Activated CD4-positive, alpha-beta memory T cell treated with anti-CD3 and anti-CD28 coated beads for 36 hours (primary cell): ENCODE measurements at regions of chr10 and their contacts with region 1.

Region 1: DNA sequence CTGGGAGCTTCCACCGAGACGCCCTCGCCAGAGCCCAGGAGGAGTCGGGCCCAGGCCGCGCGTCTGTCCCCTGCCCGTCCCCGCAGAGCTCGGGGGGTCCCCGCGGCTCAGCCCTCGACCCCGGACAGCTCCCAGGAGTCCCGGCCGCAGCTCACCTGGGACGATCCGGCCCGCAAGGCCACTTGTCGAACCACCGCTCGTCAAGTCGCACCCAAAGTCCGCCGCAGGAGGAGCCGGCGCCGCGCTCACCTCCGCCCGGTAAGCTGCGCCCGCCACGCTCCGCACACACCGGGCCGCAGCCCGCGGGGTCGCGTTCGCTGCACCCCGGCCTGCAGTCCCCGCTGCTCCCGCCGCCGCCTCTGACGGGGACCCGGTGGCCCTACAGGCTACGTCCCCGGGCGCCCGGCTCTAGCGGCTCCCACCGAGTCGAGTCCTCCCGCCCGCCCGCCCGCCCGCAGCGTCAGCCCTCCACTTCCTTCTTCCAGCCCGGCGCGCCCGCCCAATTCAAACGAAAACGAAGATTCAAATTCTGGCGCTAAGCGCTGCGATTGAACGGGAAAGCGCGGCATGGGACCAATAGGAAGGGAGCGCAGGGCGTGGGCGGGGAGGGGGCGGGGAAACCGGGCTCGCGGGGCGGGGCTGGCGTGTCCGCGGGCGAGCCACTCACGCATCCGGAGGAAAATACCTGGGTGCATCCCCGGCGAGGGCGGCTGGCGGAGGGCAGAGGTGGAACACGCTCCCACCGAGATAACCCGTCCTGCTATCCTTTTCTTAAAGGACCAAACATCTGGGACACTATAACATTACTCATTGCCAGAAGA is at the start of gene MKI67:
- DNase-seq: peak; percentile 95
- H3K4me3 Mint-ChIP-seq: peak within 1 kb of the TSS; percentile 96
- H3K27ac Mint-ChIP-seq: peak within 1 kb of the TSS; percentile 90
- H3K4me1 Mint-ChIP-seq: peaks cover 24% of the 10 kb centered on the region
- H3K27me3 Mint-ChIP-seq: peaks cover 19% of the 10 kb centered on the region
- total RNA-seq, gene MKI67: 223 to 241 TPM

Region 2: DNA sequence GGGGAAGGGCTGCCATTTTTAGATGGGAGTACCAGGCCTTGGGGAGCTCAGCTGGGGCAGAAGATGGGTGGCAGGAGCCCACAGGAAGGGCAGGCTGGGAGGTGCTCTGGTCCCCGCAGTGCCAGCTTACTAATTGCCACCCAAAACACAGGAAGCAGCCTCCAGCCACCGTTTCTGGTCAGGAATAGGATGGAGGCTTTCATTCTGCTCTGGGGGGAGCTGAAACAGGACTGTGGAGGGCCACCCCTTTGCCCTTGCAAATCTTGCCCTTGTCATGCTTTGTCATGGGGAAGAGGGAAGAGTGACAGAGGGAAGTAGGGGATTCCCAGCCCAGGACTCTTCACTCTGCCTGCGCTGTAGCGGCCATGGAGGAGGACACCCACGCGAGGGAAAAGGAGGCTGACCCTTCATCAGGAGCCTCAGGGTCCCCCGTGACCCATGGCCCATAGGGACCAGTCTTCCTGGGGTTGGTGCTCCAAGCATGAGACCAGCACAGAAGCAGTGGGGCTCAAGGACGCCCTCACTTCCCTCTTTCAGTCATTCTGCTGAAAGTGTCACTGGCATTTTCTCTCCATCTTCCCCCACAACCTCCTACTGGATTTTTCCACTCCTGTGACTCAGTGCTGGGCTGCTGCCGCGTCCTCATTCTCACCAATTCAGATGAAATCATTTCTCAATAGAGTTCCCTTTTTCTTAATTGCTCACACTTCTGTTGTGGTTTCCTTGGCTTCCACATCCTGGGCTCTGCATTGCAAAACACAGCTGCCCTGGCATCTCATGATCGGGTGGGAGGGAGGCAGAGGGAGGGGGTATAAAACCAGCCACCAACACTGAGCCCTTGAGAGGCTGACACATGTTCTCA is 61.8 kb before region 1 on chr10:
- CTCF ChIA-PET with region 1: interaction called, 5 read pairs
- POLR2A ChIA-PET with region 1: interaction called, 3 read pairs
- intact Hi-C with region 1: loop called (anchors 1 kb)
- DNase-seq: peak; percentile 91
- H3K4me3 Mint-ChIP-seq: peak overlapping the region; percentile 59
- H3K27ac Mint-ChIP-seq: peak overlapping the region; percentile 96
- H3K4me1 Mint-ChIP-seq: peaks cover 58% of the 10 kb centered on the region
- H3K27me3 Mint-ChIP-seq: no peaks in the 10 kb centered on the region

Region 3: DNA sequence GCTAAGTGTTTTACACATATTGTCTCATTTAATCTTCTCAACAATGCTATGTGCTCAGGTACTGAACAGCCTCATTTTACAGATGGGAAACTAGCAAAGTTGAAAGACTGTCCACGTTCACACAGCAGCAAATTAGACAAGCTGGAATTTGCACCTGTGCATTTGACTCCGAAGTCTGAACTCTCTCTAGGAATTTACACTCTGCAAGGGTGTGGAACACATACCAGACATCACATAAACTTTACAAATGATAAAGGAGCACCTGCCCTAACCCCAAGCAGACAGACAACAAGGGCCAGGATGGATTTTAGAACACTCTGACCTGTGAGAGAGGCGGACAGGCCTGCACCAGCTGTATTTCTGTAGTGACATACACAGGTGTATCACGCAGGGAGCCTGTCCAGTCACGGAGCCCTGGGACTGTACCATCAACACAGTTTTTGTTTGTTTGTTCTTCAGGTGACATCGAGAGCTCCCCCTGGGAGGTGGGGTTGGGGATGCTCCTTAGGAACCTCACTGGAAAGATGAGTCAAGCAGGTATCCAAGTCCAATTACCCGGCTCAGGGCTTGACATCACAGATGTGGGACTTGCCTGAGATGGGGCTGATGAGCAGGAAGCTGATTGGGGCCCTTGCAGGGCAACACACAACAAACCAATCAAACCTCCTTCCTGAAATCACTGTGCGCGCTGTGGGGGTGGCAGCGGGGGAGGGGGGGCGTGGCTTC is 31.0 kb before region 1 on chr10:
- CTCF ChIA-PET with region 1: interaction called, 3 read pairs
- POLR2A ChIA-PET with region 1: interaction called, 9 read pairs
- intact Hi-C with region 1: loop called (anchors 1 kb)
- DNase-seq: peak; percentile 75
- H3K4me3 Mint-ChIP-seq: no peak overlapping the region
- H3K27ac Mint-ChIP-seq: peak overlapping the region; percentile 38
- H3K4me1 Mint-ChIP-seq: peaks cover 21% of the 10 kb centered on the region
- H3K27me3 Mint-ChIP-seq: no peaks in the 10 kb centered on the region

Region 4: GRCh38 chr10:128150045-128150493 is 23.9 kb after region 1 on chr10:
- CTCF ChIA-PET with region 1: interaction called, 5 read pairs
- POLR2A ChIA-PET with region 1: interaction called, 3 read pairs
- intact Hi-C with region 1: loop called (anchors 1 kb)
- DNase-seq: peak; percentile 82
- H3K4me3 Mint-ChIP-seq: peak overlapping the region; percentile 72
- H3K27ac Mint-ChIP-seq: no peak overlapping the region
- H3K4me1 Mint-ChIP-seq: peaks cover 20% of the 10 kb centered on the region
- H3K27me3 Mint-ChIP-seq: no peaks in the 10 kb centered on the region